Panc1 (cell line): ENCODE measurements at regions of chr9 and their contacts with region 1.

Region 1: DNA sequence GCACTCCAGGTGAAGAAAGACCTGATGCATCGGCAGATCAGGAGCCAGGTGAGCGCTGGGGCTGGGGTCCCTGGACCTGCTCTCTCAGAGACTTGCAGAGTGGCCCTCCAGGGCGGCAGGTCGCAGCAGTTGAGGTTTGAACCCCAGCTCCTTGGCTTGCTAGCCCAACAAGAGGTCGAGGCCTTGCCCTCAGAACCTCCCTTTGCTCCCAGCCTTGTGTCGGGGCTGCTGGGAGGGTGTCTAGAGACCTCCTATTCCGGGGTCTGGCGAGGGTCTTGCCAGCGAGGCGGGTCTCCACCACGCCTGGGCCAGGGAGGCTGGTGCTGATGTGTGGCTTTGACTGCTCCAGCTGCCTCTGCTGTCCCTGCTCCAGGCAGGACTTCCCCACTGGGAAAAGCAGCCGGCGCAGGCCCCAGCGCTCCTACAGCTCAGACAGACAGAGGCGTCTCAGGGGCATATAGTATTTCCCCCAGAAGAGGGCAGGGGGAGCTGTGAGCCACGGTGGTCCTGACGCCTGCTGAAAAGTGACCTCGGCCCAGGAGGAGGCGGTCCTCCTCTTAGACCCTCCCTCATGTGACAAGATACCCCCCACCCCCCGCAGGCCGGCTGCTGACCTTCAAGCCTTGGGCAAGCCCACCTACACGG is 38.3 kb downstream of the LRSAM1 start:
- DNase-seq: no peak
- ATAC-seq: peak; percentile 59
- H3K4me3 ChIP-seq: no peak overlapping the region
- H3K27ac ChIP-seq: no peak overlapping the region
- H3K4me1 ChIP-seq: no peaks in the 10 kb centered on the region
- H3K27me3 ChIP-seq: no peaks in the 10 kb centered on the region
- CTCF ChIP-seq: no peak; the same call in 1 of the 2 replicates

Region 2: DNA sequence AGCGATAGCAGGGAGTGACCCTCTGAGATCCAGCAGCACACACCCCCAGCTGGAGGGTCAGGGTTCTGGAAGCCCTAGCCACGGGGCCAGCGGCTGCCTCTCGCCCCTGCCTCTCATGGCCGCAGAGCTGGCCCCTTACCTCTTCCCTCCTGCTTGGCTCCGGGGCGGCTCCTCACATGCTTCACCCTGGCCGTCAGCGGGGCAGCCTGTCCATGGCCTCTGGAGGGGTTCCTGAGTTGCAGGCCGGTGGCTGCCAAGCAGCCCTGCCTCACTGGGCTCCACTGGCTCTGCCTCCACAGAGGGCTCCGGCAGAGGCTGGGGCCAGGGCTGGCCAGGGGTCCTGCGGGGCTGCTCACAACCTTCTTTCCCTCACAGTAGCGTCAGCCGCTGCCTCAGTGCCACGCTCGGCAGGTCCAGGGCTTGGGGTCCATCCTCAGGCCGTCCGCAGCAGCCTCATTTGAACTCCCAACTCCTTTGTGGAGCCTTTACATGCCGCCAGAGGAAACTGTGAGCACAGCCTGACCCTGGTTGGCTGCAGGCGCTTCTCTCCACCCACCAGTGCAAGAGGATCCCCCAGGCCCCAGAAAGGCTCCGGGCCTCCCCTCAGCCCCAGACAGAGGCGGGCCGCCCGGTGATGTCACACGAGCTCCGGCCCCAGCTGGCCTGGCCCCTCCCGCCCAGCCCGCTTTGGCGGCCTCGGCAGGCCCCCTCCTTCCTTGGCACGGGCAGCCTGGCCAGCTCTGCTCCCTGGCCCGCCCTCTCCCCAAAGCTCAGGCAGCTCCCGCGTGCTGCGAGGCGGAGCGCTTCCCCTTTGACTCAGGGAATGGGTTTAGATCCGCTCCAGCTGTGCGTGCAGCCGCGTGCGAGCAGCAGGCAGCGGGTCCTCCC is 367.2 kb before region 1 on chr9 and contains the start of gene ANGPTL2:
- CTCF ChIA-PET with region 1: no interaction called
- POLR2A ChIA-PET with region 1: interaction called, 11 read pairs
- in situ Hi-C with region 1: no loop called
- intact Hi-C with region 1: no loop called
- DNase-seq: no peak
- ATAC-seq: no peak; the same call in 1 of the 2 replicates
- H3K4me3 ChIP-seq: peak within 1 kb of the TSS in 1 of 2 experiments; percentile 25; a peak in 1 of 4 replicates
- H3K27ac ChIP-seq: no peak within 1 kb of the TSS
- H3K4me1 ChIP-seq: no peaks in the 10 kb centered on the region
- H3K27me3 ChIP-seq: no peaks in the 10 kb centered on the region
- CTCF ChIP-seq: no peak
- total RNA-seq, gene ANGPTL2: 0.08 TPM

Region 3: GRCh38 chr9:127311239-127311741 is 178.3 kb before region 1 on chr9:
- CTCF ChIA-PET with region 1: no interaction called
- POLR2A ChIA-PET with region 1: no interaction called
- in situ Hi-C with region 1: no loop called
- intact Hi-C with region 1: no loop called
- DNase-seq: peak; percentile 51
- ATAC-seq: peak; percentile 68
- H3K4me3 ChIP-seq: no peak overlapping the region
- H3K27ac ChIP-seq: no peak overlapping the region
- H3K4me1 ChIP-seq: peaks cover 8% of the 10 kb centered on the region
- H3K27me3 ChIP-seq: no peaks in the 10 kb centered on the region
- CTCF ChIP-seq: peak; percentile 45